ENCODE measurements at regions of chr15 and their contacts with region 1.

Region 1: DNA sequence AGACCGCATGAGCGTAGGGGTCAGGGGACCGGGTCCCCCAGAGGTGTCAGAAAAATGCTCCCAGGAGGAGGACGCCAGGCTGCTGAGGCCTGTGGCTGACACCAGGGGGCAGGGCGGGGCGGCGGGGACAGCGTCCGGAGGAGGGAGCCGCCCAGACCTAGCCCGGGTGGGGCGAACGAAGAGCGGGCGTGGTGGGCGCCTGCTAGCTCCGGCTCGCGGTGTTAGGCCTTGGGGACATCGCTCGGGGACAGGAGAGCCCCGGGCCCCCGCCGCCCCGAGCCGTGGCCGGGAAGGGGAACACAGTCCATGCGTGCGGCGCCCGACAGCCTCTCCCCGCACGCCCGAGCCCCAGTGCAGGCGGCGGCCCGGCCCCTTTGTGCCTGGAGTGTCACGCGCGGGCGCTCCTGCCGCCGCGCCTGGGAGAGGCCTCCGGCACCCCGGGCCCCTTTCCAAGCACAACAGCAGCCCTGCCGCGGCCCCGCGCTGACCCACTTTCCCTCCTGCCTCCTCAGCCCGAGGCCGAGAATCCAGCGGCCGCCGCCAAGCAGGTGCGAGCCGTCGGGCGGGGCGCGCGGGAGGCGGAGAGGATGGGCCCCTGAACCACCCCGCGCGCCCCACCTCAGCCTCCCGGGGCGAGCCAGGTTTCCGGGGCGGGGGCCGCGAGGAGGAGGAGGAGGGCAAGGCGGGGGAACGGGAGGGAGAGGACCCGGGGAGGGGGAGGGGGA is 111.0 kb upstream of the KLF13 start:
- DNase-seq: peak; percentile 76
- H3K4me3 Mint-ChIP-seq: peak overlapping the region; percentile 67
- H3K27ac Mint-ChIP-seq: peak overlapping the region; percentile 33
- H3K4me1 Mint-ChIP-seq: peaks cover 28% of the 10 kb centered on the region
- H3K27me3 Mint-ChIP-seq: no peaks in the 10 kb centered on the region

Region 2: GRCh38 chr15:31163746-31164563 is 51.7 kb before region 1 on chr15:
- intact Hi-C with region 1: no loop called
- DNase-seq: no peak
- H3K4me3 Mint-ChIP-seq: no peak overlapping the region
- H3K27ac Mint-ChIP-seq: no peak overlapping the region
- H3K4me1 Mint-ChIP-seq: peaks cover 7% of the 10 kb centered on the region
- H3K27me3 Mint-ChIP-seq: peaks cover 2% of the 10 kb centered on the region

Region 3: DNA sequence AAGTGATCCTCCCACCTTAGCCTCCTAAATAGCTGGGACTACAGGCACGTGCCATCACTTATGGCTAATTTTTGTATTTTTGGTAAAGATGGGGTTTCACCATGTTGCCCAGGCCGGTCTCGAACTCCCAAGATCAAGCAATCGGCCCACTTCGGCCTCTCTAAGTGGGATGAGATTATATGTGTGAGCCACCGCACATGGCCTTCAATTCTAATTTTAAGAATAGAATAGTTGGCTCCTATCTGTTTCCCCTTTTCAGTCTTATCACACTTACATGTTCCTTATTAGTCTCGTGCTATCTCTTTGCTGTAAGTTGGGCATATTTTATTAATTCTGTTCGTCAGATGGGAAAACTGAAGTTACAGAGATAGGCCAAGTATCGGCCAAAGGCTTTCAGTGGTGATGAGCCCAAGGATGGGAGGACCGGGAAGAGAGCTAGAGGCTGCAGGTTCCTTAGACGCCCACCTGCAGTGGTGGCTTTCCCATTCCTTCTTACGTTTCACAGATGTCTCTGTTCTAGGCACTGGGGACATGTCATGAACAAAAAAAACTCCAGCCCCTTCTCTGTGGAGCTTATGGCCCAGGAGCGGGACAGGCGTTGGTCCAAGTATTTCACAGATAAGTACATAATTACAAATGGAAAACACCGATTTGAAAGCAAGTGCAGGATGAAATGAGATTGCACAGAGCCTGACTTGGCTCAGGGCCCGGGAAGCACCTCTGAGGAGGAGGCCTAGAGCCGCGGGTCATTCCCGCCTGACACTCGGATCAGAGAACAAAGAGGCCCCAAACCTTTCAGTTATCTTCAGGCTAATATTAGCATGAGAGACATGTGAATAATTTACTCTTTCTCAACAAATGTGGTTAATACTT is 19.9 kb after region 1 on chr15:
- intact Hi-C with region 1: no loop called
- DNase-seq: no peak
- H3K4me3 Mint-ChIP-seq: no peak overlapping the region
- H3K27ac Mint-ChIP-seq: no peak overlapping the region
- H3K4me1 Mint-ChIP-seq: peaks cover 6% of the 10 kb centered on the region
- H3K27me3 Mint-ChIP-seq: peaks cover 6% of the 10 kb centered on the region

Region 4: GRCh38 chr15:31265871-31266711 is 50.4 kb after region 1 on chr15:
- intact Hi-C with region 1: loop called (anchors 2 kb)
- DNase-seq: peak; percentile 78
- H3K4me3 Mint-ChIP-seq: peak overlapping the region; percentile 35
- H3K27ac Mint-ChIP-seq: peak overlapping the region; percentile 74
- H3K4me1 Mint-ChIP-seq: peaks cover 78% of the 10 kb centered on the region
- H3K27me3 Mint-ChIP-seq: no peaks in the 10 kb centered on the region

Measured in activated T-helper 2 cell treated with anti-CD3 and anti-CD28 coated beads, Interferon-gamma antibody, Interleukin-2, Interleukin-4, amounts not matched to agents 10 μg/mL and 5 μg/mL and 100 μg/mL, durations not matched to agents 14 hours and 24 hours and 36 hours (primary cell).